Heart right ventricle (tissue), 16 donors: ENCODE measurements at regions of chr7 and their contacts with region 1.

Region 1: GRCh38 chr7:128830231-128831177 is at the start of gene FLNC:
- DNase-seq: peak; percentile 63 to 70
- ATAC-seq: peak; percentile 0 to 25 (median 8)
- H3K4me3 ChIP-seq: peak within 1 kb of the TSS; percentile 55 to 92 (median 72)
- H3K27ac ChIP-seq: peak within 1 kb of the TSS; percentile 86 to 99 (median 94)
- H3K4me1 ChIP-seq: peaks cover 20 to 79% (median 50%) of the 10 kb centered on the region in 9 donors
- H3K27me3 ChIP-seq: peaks cover 0 to 46% (median 0%) of the 10 kb centered on the region in 7 donors
- CTCF ChIP-seq: no peak
- total RNA-seq, gene FLNC: 364 to 2,445 (median 1,303) TPM

Region 2: DNA sequence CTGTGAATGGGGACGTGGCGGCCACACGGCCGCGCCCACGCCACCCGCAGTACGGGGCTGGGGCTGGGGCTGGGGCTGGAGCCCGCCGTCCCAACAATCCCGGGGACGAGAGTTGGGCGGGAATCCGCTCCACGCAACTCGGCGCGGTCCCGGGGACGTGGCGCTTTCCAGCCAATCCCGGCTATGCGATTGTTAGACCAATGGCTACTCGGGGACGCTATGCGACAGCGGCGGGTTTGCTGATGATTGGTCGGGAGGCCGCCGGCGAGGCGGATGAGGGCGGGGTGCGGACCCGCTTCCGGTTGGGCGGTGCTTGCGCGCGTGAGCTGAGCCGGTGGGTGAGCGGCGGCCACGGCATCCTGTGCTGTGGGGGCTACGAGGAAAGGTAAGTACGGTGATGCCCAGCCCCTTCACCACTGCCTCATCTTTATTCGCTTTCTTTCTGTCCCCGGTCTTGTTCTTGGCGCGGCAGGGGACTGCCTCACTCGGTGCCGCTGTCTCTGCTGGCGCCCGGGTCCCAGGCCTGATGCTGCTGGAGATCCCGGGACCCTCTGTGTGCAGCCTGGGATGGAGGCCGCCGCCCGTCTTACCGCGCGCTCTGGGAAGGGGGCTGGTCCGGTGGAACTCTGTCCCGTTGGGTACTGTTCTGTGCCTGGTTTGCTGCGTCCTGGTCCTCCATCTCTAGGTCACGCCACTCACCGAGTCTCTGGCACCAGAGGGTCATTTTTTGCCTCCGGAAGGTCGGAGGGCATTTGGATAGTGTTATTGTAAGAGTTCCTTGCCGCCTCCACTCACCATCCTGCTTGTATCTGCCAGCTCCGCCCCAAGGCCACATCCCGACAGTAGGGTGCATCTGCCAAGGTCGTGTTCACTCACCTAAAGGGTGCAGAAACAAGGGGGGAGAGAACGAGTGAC is 91.2 kb before region 1 on chr7 and contains the start of gene CALU:
- intact Hi-C with region 1: loop called in 2 of 10 experiments (anchors 2 to 5 kb)
- DNase-seq: peak; percentile 96 to 97
- ATAC-seq: peak; percentile 97 to 99 (median 98)
- H3K4me3 ChIP-seq: peak within 1 kb of the TSS; percentile 69 to 99 (median 93)
- H3K27ac ChIP-seq: peak within 1 kb of the TSS; percentile 49 to 97 (median 94)
- H3K4me1 ChIP-seq: peaks cover 3 to 62% (median 47%) of the 10 kb centered on the region in 9 donors
- H3K27me3 ChIP-seq: no peaks in the 10 kb centered on the region
- CTCF ChIP-seq: no peak
- total RNA-seq, gene CALU: 197 to 333 (median 249) TPM

Region 3: GRCh38 chr7:128755819-128756476 is 74.6 kb before region 1 on chr7:
- intact Hi-C with region 1: loop called in 2 of 10 experiments (anchors 5 to 10 kb)
- DNase-seq: no peak
- ATAC-seq: peak; percentile 40 to 78 (median 68)
- H3K4me3 ChIP-seq: no peak overlapping the region
- H3K27ac ChIP-seq: peak overlapping the region in 8 of 10 donors; percentile 17 to 70 (median 66)
- H3K4me1 ChIP-seq: peaks cover 0 to 59% (median 22%) of the 10 kb centered on the region in 9 donors
- H3K27me3 ChIP-seq: no peaks in the 10 kb centered on the region
- CTCF ChIP-seq: no peak

Region 4: DNA sequence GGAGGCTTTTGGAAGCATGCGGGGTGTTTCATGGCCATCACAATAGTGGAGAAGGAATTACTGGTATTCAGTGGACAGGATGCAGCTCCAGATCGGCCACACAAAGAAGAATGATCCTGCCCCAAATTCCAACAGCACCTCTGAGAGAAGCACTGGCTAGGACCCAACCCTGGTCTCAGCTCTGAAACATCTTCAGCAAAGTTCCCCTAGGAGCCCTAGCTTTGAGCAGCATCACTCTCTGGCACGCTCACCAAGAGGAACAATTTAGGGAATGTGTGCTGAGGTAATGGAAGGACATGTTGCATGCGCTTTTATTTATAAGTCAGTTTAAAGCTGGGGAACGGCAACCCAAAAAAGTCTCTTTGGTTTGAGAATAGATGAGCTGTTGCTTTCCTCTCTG is 49.4 kb before region 1 on chr7:
- intact Hi-C with region 1: no loop called
- DNase-seq: no peak
- ATAC-seq: peak in 6 of 8 donors; percentile 25 to 47 (median 39)
- H3K4me3 ChIP-seq: no peak overlapping the region
- H3K27ac ChIP-seq: peak overlapping the region in 3 of 10 donors; percentile 51 to 65 (median 55)
- H3K4me1 ChIP-seq: peaks cover 0 to 19% (median 4%) of the 10 kb centered on the region in 9 donors
- H3K27me3 ChIP-seq: no peaks in the 10 kb centered on the region
- CTCF ChIP-seq: no peak

Region 5: GRCh38 chr7:128791121-128791961 is 39.2 kb before region 1 on chr7:
- intact Hi-C with region 1: loop called in 4 of 10 experiments (anchors 5 kb)
- DNase-seq: peak; percentile 67 to 81
- ATAC-seq: peak; percentile 70 to 88 (median 83)
- H3K4me3 ChIP-seq: peak overlapping the region; percentile 64 to 97 (median 85)
- H3K27ac ChIP-seq: peak overlapping the region in 7 of 10 donors; percentile 23 to 77 (median 49)
- H3K4me1 ChIP-seq: peaks cover 8 to 29% (median 25%) of the 10 kb centered on the region in 9 donors
- H3K27me3 ChIP-seq: peaks cover 0 to 21% (median 0%) of the 10 kb centered on the region in 7 donors
- CTCF ChIP-seq: no peak

Region 6: GRCh38 chr7:128862571-128863432 is 32.3 kb after region 1 on chr7 and contains the start of gene ATP6V1F:
- intact Hi-C with region 1: loop called in 1 of 10 experiments (anchors 2 kb)
- DNase-seq: peak; percentile 98 to 99
- ATAC-seq: peak; percentile 81 to 94 (median 88)
- H3K4me3 ChIP-seq: peak within 1 kb of the TSS; percentile 56 to 83 (median 70)
- H3K27ac ChIP-seq: peak within 1 kb of the TSS in 9 of 10 donors; percentile 40 to 87 (median 75)
- H3K4me1 ChIP-seq: peaks cover 17 to 62% (median 41%) of the 10 kb centered on the region in 9 donors
- H3K27me3 ChIP-seq: no peaks in the 10 kb centered on the region
- CTCF ChIP-seq: peak in 1 of 9 donors; percentile 10
- total RNA-seq, gene ATP6V1F: 96.7 to 168 (median 124) TPM

Region 7: GRCh38 chr7:128904381-128905197 is 74.1 kb after region 1 on chr7:
- intact Hi-C with region 1: no loop called
- DNase-seq: no peak
- ATAC-seq: peak in 5 of 8 donors; percentile 16 to 60 (median 25)
- H3K4me3 ChIP-seq: no peak overlapping the region
- H3K27ac ChIP-seq: no peak overlapping the region
- H3K4me1 ChIP-seq: peaks cover 0 to 3% (median 2%) of the 10 kb centered on the region in 9 donors
- H3K27me3 ChIP-seq: peaks cover 0 to 50% (median 31%) of the 10 kb centered on the region in 7 donors
- CTCF ChIP-seq: peak; percentile 5 to 67 (median 58)

Region 8: DNA sequence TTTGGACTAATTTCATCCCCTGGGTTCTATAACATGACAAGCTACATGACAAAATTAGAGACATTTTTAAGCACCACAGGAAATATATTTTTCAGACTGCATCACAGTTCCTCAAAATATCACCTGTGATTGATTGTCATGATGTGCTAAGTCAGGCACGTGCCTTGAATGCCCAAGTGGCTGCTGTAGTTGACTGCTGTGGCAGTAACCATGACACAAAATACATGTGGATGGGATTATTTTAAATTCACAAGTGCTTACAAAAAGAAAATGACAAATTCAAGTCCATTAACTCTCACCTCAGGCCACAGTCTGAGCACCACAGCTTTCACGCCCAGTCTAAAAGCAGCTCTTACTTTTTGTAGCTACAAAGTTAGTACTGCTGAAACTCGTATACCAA is 178.9 kb after region 1 on chr7:
- intact Hi-C with region 1: no loop called
- DNase-seq: no peak
- ATAC-seq: no peak
- H3K4me3 ChIP-seq: no peak overlapping the region
- H3K27ac ChIP-seq: no peak overlapping the region
- H3K4me1 ChIP-seq: peaks cover 0 to 22% (median 5%) of the 10 kb centered on the region in 9 donors
- H3K27me3 ChIP-seq: no peaks in the 10 kb centered on the region
- CTCF ChIP-seq: no peak